Activated CD4-positive, alpha-beta T cell treated with anti-CD3 and anti-CD28 coated beads, Interleukin-2, amount 10 ng/mL, durations not matched to agents 24 days and 14 days (primary cell): ENCODE measurements at regions of chr19 and their contacts with region 1.

Region 1: GRCh38 chr19:56393119-56394012 is at the start of gene ZNF582:
- DNase-seq: peak; percentile 96
- H3K4me3 Mint-ChIP-seq: peak within 1 kb of the TSS; percentile 91
- H3K27ac Mint-ChIP-seq: peak within 1 kb of the TSS; percentile 84
- H3K4me1 Mint-ChIP-seq: peaks cover 5% of the 10 kb centered on the region
- H3K27me3 Mint-ChIP-seq: no peaks in the 10 kb centered on the region
- total RNA-seq, gene ZNF582: 1.0 and 2.1 TPM in 2 replicates

Region 2: DNA sequence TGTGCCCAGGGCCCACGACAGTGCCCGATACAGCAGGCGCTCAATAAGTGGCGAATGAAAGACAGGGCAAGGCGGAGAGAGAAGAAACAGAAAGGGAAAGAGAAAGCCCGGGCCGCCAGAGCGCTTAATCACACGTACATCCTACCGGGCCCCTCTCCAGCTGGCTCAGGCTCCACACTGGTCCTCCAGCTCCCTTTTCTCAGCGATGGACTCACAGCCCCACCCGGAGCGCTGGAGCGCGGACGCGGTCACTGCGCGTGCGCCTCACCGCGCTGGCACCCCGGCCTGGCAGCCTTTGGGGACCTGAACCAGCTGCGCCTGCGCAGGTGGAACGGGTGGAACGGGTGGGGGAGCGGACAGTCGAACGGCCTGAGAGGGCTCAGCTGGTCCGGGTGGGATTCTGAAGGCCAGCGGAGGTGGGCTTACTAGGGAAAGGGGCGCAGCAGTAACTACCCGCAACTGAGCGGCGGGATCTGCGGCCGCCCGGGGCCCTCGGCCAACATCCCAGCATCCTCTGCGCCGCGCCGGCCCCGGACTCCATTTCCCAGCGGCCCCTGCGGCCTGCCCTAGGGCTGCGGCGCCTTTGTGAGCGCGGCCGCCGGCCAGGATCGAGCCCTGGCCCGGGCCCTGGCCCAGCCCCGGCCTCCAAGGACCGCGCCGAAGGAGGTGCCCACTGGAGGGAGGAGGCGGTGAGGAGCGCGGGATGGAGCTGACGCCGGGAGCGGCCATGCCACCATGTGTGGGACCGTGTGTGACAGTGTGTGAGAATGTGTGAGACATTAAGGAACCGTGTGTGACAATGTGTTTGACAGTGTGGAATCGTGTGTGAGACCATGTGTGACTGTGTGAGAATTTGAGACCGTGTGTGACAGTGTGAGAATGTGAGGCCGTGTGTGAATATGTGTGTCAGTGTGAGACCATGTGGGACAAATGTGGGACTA is 10.7 kb after region 1 on chr19 and contains the start of gene ZNF583:
- intact Hi-C with region 1: loop called (anchors 1 kb)
- DNase-seq: peak; percentile 96
- H3K4me3 Mint-ChIP-seq: peak within 1 kb of the TSS; percentile 84
- H3K27ac Mint-ChIP-seq: peak within 1 kb of the TSS; percentile 95
- H3K4me1 Mint-ChIP-seq: peaks cover 21% of the 10 kb centered on the region
- H3K27me3 Mint-ChIP-seq: no peaks in the 10 kb centered on the region
- total RNA-seq, gene ZNF583: 1.9 and 2.0 TPM in 2 replicates